ENCODE measurements at regions of chr12 and their contacts with region 1.

Region 1: GRCh38 chr12:89390802-89391673 is 38.7 kb upstream of the DUSP6 start:
- DNase-seq: no peak
- H3K4me3 ChIP-seq: no peak overlapping the region
- H3K27ac ChIP-seq: peak overlapping the region in 1 of 2 donors; percentile 78
- H3K4me1 ChIP-seq: peaks cover 0 to 5% of the 10 kb centered on the region in 2 donors
- H3K27me3 ChIP-seq: no peaks in the 10 kb centered on the region
- CTCF ChIP-seq: no peak
- POLR2A ChIP-seq: no peak

Region 2: GRCh38 chr12:89373763-89374572 is 17.1 kb before region 1 on chr12:
- intact Hi-C with region 1: no loop called
- DNase-seq: peak in 1 of 2 donors; percentile 55
- H3K4me3 ChIP-seq: no peak overlapping the region
- H3K27ac ChIP-seq: peak overlapping the region; percentile 75 to 82
- H3K4me1 ChIP-seq: peaks cover 0 to 3% of the 10 kb centered on the region in 2 donors
- H3K27me3 ChIP-seq: no peaks in the 10 kb centered on the region
- CTCF ChIP-seq: no peak
- POLR2A ChIP-seq: no peak

Region 3: GRCh38 chr12:89401433-89402058 is 10.5 kb after region 1 on chr12:
- intact Hi-C with region 1: loop called (anchors 1 kb)
- DNase-seq: no peak
- H3K4me3 ChIP-seq: no peak overlapping the region
- H3K27ac ChIP-seq: no peak overlapping the region
- H3K4me1 ChIP-seq: no peaks in the 10 kb centered on the region
- H3K27me3 ChIP-seq: no peaks in the 10 kb centered on the region
- CTCF ChIP-seq: no peak
- POLR2A ChIP-seq: no peak

Region 4: GRCh38 chr12:89603678-89604077 is 212.6 kb after region 1 on chr12:
- intact Hi-C with region 1: no loop called
- DNase-seq: no peak
- H3K4me3 ChIP-seq: no peak overlapping the region
- H3K27ac ChIP-seq: no peak overlapping the region
- H3K4me1 ChIP-seq: no peaks in the 10 kb centered on the region
- H3K27me3 ChIP-seq: no peaks in the 10 kb centered on the region
- CTCF ChIP-seq: no peak
- POLR2A ChIP-seq: no peak